ENCODE measurements at regions of chr18 and their contacts with region 1.

Region 1: DNA sequence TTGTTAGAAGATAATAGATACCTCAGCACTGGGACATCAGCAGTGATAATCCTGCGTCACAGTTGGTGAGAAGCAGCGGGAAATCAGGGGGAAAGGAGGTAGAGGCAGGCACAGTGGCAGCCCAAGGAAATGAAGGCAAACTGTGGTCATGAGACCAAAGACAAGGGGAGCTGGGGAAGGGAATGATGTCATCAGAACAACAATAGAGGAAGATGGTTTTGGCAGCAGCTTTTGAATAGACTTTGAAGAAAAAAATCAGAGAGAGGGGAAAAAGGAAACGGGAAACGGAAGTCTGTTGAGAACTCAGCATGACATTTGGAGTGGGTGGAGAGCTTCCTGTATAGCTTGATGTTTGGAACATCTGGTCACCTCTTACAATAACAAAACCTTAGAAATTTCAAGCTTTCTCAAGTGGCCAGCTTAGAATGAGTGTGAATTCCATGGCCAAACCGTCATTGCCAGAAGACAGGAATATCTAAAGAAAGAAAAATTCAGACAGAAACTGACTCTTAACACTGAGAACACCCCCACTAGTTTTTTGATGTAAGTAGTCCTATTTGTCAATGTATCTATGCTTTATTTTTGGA is 18.4 kb upstream of the YES1 start:
- DNase-seq: no peak

Region 2: GRCh38 chr18:245282-245847 is 585.0 kb before region 1 on chr18:
- intact Hi-C with region 1: no loop called
- DNase-seq: no peak

Region 3: GRCh38 chr18:527146-527545 is 303.3 kb before region 1 on chr18:
- intact Hi-C with region 1: no loop called
- DNase-seq: no peak

Region 4: DNA sequence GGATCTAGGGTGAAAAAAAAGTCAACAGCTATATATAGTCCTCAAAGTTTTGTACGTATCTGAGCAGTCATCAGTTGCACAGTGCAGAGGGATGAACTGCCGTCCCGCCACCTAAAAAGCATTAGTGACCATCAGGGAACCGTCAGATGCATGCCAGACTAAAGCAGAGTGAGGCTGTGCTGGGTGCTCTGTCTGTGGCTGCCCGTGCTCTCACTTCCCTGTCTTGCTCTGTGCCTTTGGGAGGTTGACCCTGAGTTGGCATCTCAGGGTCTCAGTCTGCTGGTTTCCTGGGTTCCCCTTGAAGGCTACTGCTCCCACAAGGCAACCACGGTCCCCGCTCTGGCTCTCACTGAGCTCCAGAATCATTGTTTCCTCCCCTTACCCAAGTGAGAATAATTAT is 222.5 kb before region 1 on chr18:
- intact Hi-C with region 1: no loop called
- DNase-seq: no peak

Region 5: DNA sequence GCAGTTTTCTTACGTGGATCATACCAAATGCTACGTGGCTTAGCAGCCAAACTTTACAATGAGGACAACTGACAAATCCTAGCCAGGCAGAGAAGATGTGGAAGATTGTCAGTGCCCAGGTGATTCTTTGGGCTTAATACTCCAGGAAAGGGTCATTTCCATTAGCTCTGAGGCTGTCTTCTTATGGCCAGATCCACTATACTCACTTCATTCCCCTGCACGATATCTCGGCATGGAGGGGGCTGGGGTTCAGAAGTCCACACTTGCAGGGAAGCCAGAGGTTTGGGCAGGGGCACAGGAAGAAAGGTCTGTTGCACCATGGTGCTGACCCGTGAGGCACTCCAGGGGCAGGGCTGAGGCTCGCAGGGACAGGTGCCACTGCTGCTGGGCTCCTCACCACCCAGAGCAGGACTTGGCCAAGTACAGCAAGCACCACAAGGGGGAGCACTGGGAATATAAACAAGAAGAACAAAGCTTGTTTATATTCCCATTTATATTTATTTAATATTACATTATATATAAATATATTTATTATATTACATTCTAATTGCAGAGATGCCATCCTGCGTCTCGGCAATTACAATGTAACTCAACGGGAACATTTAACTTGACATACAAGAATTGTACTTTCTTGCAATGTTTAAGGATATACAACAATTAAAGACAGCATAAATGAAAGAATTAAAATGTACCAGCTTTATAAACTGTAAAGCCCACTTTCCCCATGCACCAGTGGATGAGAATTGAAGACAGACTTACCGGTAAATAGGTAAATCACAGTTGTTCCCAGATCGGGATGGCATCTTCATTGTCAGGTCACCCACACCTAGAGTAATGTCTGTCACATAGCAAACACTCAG is 206.4 kb before region 1 on chr18:
- intact Hi-C with region 1: loop called (anchors 2 kb)
- DNase-seq: no peak

Region 6: GRCh38 chr18:741931-742512 is 88.4 kb before region 1 on chr18:
- intact Hi-C with region 1: loop called (anchors 2 kb)
- DNase-seq: no peak

Region 7: DNA sequence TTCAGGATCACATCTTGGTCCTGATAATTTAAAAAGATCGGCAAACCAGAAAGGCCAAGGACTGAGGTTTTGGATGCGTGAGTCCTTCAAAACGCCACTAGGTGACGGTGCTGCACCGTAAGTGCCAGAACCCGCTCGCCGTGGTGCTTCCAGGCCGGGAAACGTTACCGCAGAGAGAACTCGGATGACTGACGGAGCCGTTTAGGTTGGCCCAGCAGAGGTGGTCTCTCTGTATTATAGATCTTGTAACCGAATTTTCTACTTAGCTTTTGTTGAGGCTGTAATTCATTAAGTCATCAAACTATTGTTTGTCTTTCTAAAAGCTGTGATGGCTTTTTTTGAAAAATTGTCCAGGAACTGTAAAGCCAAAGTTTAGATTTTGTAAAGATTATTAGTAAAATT is 34.5 kb after region 1 on chr18:
- intact Hi-C with region 1: no loop called
- DNase-seq: no peak

Measured in cardiac septum (tissue), 1 donor.